ENCODE measurements at regions of chr1 and their contacts with region 1.

Region 1: DNA sequence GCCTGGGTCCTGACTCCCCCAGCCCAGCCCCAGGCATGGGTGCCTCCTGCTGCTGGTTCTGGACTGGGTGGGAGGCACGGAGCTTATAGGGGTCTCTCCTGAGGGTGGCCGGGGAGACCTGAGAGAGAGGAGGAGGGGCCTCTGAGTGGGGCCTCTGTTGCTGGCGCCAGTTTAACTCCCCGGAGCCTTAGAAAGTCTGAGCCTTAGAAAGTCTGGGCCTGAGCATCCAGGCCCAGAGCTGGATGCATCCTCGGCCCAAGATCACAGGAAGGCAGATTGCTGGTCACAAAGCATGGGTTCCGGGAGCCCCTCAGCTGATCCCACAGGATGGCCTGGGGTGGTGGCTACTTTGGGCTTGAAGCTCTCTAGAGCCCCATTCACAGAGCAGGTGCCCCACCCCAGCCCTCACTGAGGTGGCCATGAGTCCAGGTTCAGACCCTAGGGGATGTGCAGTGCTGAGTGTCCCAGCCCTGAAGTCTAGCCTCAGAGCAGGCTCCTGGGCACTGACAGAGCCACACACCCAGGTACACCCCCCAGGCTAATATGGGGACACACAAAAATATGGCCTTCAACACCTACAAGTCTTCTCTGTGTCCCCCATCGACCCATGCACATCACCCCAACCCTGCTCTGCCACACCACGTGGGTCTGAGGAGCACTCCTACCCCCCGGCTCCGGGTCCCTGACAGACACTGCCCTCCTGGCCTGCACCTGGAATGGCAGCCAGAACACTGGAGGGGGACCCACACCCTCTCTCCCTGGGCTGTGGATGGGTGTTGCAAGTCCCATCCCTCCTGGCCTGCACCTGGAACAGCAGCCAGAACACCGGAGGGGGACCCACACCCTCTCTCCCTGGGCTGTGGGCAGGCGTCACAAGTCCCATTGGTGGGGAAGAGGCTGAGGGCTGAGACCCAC is 9.7 kb downstream of the PLA2G2F start:
- DNase-seq: peak in 1 of 6 donors; percentile 50
- ATAC-seq: no peak
- H3K4me3 ChIP-seq: no peak overlapping the region
- H3K27ac ChIP-seq: no peak overlapping the region
- H3K4me1 ChIP-seq: peaks cover 0 to 13% (median 4%) of the 10 kb centered on the region in 3 donors
- H3K27me3 ChIP-seq: no peaks in the 10 kb centered on the region
- CTCF ChIP-seq: no peak

Region 2: GRCh38 chr1:19974822-19975416 is 173.9 kb before region 1 on chr1:
- intact Hi-C with region 1: loop called in 1 of 3 experiments (anchors 10 kb)
- DNase-seq: peak in 4 of 6 donors; percentile 43 to 76 (median 57)
- ATAC-seq: peak; percentile 89 to 96 (median 91)
- H3K4me3 ChIP-seq: no peak overlapping the region
- H3K27ac ChIP-seq: peak overlapping the region in 1 of 4 donors; percentile 42
- H3K4me1 ChIP-seq: peaks cover 0 to 5% (median 4%) of the 10 kb centered on the region in 3 donors
- H3K27me3 ChIP-seq: no peaks in the 10 kb centered on the region
- CTCF ChIP-seq: peak; percentile 16 to 56 (median 46)

Region 3: GRCh38 chr1:20037877-20038276 is 110.9 kb before region 1 on chr1:
- intact Hi-C with region 1: no loop called
- DNase-seq: no peak
- ATAC-seq: no peak
- H3K4me3 ChIP-seq: no peak overlapping the region
- H3K27ac ChIP-seq: no peak overlapping the region
- H3K4me1 ChIP-seq: no peaks in the 10 kb centered on the region
- H3K27me3 ChIP-seq: no peaks in the 10 kb centered on the region
- CTCF ChIP-seq: no peak

Region 4: GRCh38 chr1:20265250-20265649 is 116.4 kb after region 1 on chr1:
- intact Hi-C with region 1: no loop called
- DNase-seq: no peak
- ATAC-seq: no peak
- H3K4me3 ChIP-seq: no peak overlapping the region
- H3K27ac ChIP-seq: no peak overlapping the region
- H3K4me1 ChIP-seq: no peaks in the 10 kb centered on the region
- H3K27me3 ChIP-seq: peaks cover 0 to 2% (median 0%) of the 10 kb centered on the region in 4 donors
- CTCF ChIP-seq: no peak